HepG2 (cell line): ENCODE measurements at regions of chr15 and their contacts with region 1.

Region 1: GRCh38 chr15:70995383-70995970 is 102.9 kb downstream of the LRRC49 start:
- DNase-seq: no peak
- ATAC-seq: no peak
- H3K4me3 ChIP-seq: no peak overlapping the region
- H3K27ac ChIP-seq: no peak overlapping the region
- H3K4me1 ChIP-seq: no peaks in the 10 kb centered on the region
- H3K27me3 ChIP-seq: no peaks in the 10 kb centered on the region
- CTCF ChIP-seq: no peak
- EP300 ChIP-seq: no peak
- POLR2A ChIP-seq: no peak
- RAD21 ChIP-seq: no peak

Region 2: GRCh38 chr15:71005895-71006294 is 10.4 kb after region 1 on chr15:
- CTCF ChIA-PET with region 1: no interaction called
- POLR2A ChIA-PET with region 1: no interaction called
- in situ Hi-C with region 1: no loop called
- intact Hi-C with region 1: loop called (anchors 1 kb)
- DNase-seq: no peak
- ATAC-seq: no peak
- H3K4me3 ChIP-seq: no peak overlapping the region
- H3K27ac ChIP-seq: no peak overlapping the region
- H3K4me1 ChIP-seq: no peaks in the 10 kb centered on the region
- H3K27me3 ChIP-seq: no peaks in the 10 kb centered on the region
- CTCF ChIP-seq: no peak
- EP300 ChIP-seq: no peak
- POLR2A ChIP-seq: no peak
- RAD21 ChIP-seq: no peak

Region 3: DNA sequence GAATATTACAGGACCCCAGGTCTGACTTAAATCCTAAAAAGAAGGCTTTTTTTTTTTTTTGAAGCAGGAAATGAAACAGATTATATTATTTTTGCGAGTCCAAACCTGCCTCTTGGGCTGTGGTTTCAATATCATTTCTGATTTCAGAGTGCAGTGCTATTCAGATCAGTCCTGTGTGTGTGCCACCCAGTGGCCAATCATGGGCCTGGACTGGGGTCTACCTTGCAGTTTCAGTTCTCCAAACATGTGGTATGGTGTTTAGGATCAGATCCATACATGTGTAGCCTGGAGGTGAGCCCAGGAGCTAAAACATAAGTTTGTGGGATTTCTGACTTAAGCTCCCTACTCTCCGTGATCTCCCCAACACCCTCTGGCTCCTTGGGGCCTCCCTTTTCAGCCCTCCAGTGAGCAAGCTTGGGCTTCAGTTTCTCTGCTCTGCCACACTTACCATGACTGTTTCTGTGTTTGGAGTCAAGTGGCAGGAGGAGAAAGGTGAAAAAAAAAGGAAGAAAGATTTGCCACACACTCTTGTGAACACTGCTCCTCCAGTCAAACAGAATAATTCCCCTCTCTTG is 107.7 kb after region 1 on chr15:
- CTCF ChIA-PET with region 1: no interaction called
- POLR2A ChIA-PET with region 1: no interaction called
- in situ Hi-C with region 1: no loop called
- intact Hi-C with region 1: no loop called
- DNase-seq: peak; percentile 15
- ATAC-seq: peak; percentile 90
- H3K4me3 ChIP-seq: no peak overlapping the region
- H3K27ac ChIP-seq: no peak overlapping the region
- H3K4me1 ChIP-seq: no peaks in the 10 kb centered on the region
- H3K27me3 ChIP-seq: no peaks in the 10 kb centered on the region
- CTCF ChIP-seq: peak; percentile 52
- EP300 ChIP-seq: no peak
- POLR2A ChIP-seq: no peak
- RAD21 ChIP-seq: no peak